T-cell (primary cell): ENCODE measurements at regions of chr19 and their contacts with region 1.

Region 1: GRCh38 chr19:10870955-10871603 is at the start of gene CARM1:
- DNase-seq: peak; percentile 97 to 100 (median 99)
- ATAC-seq: peak; percentile 84 to 88 (median 87)
- H3K4me3 ChIP-seq: peak within 1 kb of the TSS; percentile 57 to 63
- H3K4me3 Mint-ChIP-seq: peak within 1 kb of the TSS; percentile 73 to 89 (median 77)
- H3K27ac ChIP-seq: peak within 1 kb of the TSS; percentile 64
- H3K27ac Mint-ChIP-seq: peak within 1 kb of the TSS; percentile 62 to 79
- H3K4me1 ChIP-seq: peaks cover 10 to 23% of the 10 kb centered on the region in 2 experiments
- H3K4me1 Mint-ChIP-seq: peaks cover 14 to 27% (median 18%) of the 10 kb centered on the region in 3 donors
- H3K27me3 ChIP-seq: no peaks in the 10 kb centered on the region
- H3K27me3 Mint-ChIP-seq: no peaks in the 10 kb centered on the region
- total RNA-seq, gene CARM1: 22.3 to 35.2 (median 30.8) TPM

Region 2: GRCh38 chr19:10884274-10884673 is 13.2 kb after region 1 on chr19:
- CTCF ChIA-PET with region 1: no interaction called
- POLR2A ChIA-PET with region 1: no interaction called
- DNase-seq: no peak
- ATAC-seq: no peak
- H3K4me3 ChIP-seq: no peak overlapping the region
- H3K4me3 Mint-ChIP-seq: no peak overlapping the region
- H3K27ac ChIP-seq: no peak overlapping the region
- H3K27ac Mint-ChIP-seq: no peak overlapping the region
- H3K4me1 ChIP-seq: peaks cover 0 to 2% of the 10 kb centered on the region in 2 experiments
- H3K4me1 Mint-ChIP-seq: peaks cover 8 to 12% (median 10%) of the 10 kb centered on the region in 3 donors
- H3K27me3 ChIP-seq: no peaks in the 10 kb centered on the region
- H3K27me3 Mint-ChIP-seq: no peaks in the 10 kb centered on the region

Region 3: DNA sequence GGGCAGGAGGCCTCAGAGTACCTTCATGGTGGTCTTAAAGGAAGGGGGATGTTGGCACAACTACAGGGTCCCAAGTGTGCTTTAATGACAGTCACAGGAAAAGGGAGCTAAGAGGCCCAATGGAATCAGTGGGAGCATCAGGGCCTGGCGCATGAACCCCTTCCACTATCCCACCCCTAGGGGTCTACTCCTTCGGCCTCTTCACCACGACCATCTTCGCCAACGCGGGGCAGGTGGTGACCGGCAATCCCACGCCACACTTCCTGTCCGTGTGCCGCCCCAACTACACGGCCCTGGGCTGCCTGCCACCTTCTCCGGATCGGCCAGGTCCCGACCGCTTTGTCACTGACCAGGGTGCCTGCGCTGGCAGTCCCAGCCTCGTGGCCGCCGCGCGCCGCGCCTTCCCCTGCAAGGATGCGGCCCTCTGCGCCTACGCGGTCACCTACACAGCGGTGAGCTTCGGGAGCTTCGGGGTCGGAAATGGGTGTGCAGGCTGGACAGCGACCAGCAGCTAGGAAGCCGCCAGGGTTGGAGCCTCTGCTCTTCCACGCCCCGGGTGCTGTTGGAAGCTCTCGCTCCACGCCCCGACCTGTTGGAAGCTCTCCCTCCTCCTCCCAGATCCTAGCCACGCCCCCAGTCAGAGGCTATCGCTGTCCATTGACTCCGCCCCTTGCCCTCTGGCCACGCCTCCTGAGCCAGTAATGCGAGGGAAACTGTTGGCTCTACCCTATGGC is 490.1 kb after region 1 on chr19:
- CTCF ChIA-PET with region 1: interaction called in 1 of 2 experiments, 10 read pairs
- POLR2A ChIA-PET with region 1: no interaction called
- DNase-seq: no peak
- ATAC-seq: no peak
- H3K4me3 ChIP-seq: no peak overlapping the region
- H3K4me3 Mint-ChIP-seq: no peak overlapping the region
- H3K27ac ChIP-seq: no peak overlapping the region
- H3K27ac Mint-ChIP-seq: no peak overlapping the region
- H3K4me1 ChIP-seq: peaks cover 0 to 2% of the 10 kb centered on the region in 2 experiments
- H3K4me1 Mint-ChIP-seq: peaks cover 2 to 4% (median 3%) of the 10 kb centered on the region in 3 donors
- H3K27me3 ChIP-seq: peaks cover 0 to 6% of the 10 kb centered on the region in 2 experiments
- H3K27me3 Mint-ChIP-seq: peaks cover 3% of the 10 kb centered on the region in 2 donors